ENCODE measurements at regions of chr9 and their contacts with region 1.

Region 1: DNA sequence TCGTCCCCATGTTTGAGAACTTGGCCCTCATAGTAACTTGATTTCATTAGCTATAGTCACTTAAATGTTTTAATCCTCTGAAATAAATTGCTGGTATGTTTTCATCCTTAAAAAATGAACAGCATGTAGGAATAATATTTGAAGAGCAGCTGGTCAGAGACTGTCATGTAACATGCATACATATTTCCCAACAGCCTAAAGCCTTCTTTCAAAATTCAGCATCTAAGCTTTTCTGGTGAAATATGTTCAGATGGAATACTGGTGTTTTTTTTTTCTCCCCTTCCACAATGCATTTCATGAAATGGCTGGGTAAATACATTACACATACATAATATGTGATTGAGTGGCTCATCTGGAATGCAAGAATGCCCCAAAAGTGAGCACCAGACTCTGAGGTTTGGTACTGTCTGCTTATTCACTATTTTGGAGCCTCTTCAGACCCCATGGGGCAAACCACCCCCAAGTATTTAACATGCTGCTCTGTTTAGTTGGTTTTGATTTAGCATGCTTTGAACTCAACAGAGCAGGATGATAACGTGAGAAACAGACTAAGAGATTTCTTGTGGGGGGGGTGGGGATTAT is 94.0 kb downstream of the SMARCA2 start:
- DNase-seq: no peak
- ATAC-seq: no peak
- H3K4me3 ChIP-seq: no peak overlapping the region
- H3K27ac ChIP-seq: no peak overlapping the region
- H3K4me1 ChIP-seq: no peaks in the 10 kb centered on the region
- H3K27me3 ChIP-seq: no peaks in the 10 kb centered on the region
- CTCF ChIP-seq: no peak
- POLR2A ChIP-seq: no peak

Region 2: GRCh38 chr9:2017331-2018161 is 91.6 kb before region 1 on chr9:
- intact Hi-C with region 1: no loop called
- DNase-seq: peak; percentile 80 to 90 (median 85)
- ATAC-seq: peak; percentile 20 to 53 (median 42)
- H3K4me3 ChIP-seq: peak overlapping the region; percentile 54 to 97 (median 88)
- H3K27ac ChIP-seq: peak overlapping the region; percentile 92 to 99 (median 97)
- H3K4me1 ChIP-seq: peaks cover 0 to 58% (median 43%) of the 10 kb centered on the region in 12 donors
- H3K27me3 ChIP-seq: no peaks in the 10 kb centered on the region
- CTCF ChIP-seq: no peak
- POLR2A ChIP-seq: peak in 1 of 2 donors; percentile 47

Region 3: GRCh38 chr9:2072752-2073405 is 36.3 kb before region 1 on chr9:
- intact Hi-C with region 1: loop called in 1 of 10 experiments (anchors 5 kb)
- DNase-seq: no peak
- ATAC-seq: no peak
- H3K4me3 ChIP-seq: no peak overlapping the region
- H3K27ac ChIP-seq: no peak overlapping the region
- H3K4me1 ChIP-seq: peaks cover 0 to 2% (median 0%) of the 10 kb centered on the region in 12 donors
- H3K27me3 ChIP-seq: no peaks in the 10 kb centered on the region
- CTCF ChIP-seq: no peak
- POLR2A ChIP-seq: no peak

Region 4: DNA sequence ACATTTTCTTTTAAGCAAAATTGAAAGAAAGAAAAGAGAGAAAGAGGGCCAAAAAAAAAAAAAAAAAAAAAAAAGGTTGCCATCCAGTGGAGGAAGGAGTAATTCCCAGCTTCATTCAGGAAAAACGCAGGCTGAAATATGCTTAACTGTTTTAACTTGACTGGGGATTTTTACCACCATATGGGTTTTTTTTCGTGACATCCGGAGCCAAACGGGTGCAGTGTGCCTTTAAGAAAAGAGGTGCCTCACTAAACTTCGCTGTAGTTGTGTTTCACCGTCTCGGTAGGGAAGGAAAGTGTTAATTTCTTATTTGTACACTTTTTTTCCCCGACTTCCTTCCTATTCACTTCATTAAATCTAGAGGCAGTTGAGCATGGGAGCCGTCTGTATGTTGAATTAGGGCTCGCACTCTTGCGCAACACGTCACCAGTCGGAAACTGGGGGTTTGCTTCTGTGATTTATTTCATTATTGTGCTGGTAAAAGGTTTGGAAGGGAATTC is 49.0 kb after region 1 on chr9:
- intact Hi-C with region 1: loop called in 1 of 10 experiments (anchors 10 kb)
- DNase-seq: peak in 3 of 5 donors; percentile 20 to 53 (median 36)
- ATAC-seq: peak; percentile 24 to 61 (median 48)
- H3K4me3 ChIP-seq: peak overlapping the region; percentile 1 to 71 (median 56)
- H3K27ac ChIP-seq: peak overlapping the region; percentile 51 to 79 (median 72)
- H3K4me1 ChIP-seq: peaks cover 0 to 65% (median 23%) of the 10 kb centered on the region in 12 donors
- H3K27me3 ChIP-seq: no peaks in the 10 kb centered on the region
- CTCF ChIP-seq: peak in 3 of 12 donors; percentile 8 to 22 (median 14)
- POLR2A ChIP-seq: no peak